Dendritic cell treated with granulocyte-macrophage colony-stimulating factor and Interleukin-4, amounts not matched to agents 40 ng/mL and 50 ng/mL, for 4 days (primary cell): ENCODE measurements at regions of chr12 and their contacts with region 1.

Region 1: GRCh38 chr12:55817346-55818139 is at the starts of genes ORMDL2 and SARNP:
- H3K4me3 Mint-ChIP-seq: no peak within 1 kb of the TSS
- H3K27ac Mint-ChIP-seq: no peak within 1 kb of the TSS
- H3K4me1 Mint-ChIP-seq: peaks cover 35% of the 10 kb centered on the region
- H3K27me3 Mint-ChIP-seq: no peaks in the 10 kb centered on the region

Region 2: DNA sequence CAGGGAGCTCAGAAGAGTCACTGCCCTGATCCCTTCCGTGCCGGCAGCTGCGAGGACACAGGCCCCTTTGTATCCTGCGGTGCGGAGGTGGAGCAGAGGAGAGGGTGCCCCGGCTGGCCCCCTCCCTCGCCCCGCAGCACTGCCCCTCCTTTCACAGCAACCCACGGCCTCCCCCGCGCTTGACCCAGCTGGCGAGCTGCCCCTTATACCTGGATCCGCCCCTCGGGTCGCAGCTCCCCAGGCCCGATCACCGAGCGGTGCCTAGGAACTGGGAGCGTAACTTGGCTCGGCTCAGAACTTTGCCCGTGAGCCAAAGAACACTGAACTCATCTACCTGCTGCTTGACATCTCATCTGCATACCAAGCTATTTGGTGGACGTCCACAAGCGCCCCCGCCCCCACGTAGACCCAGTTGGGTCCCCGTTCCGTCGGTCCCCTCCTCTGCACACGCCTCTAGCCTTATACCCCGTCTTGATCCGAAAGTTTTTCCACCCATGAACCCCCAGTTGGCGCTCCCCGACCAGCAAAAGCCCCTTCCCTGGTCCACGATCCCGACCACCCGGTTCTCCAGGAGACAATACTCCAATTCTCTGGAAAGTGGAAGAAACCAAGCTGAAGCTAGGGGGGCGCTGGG is 12.5 kb after region 1 on chr12:
- intact Hi-C with region 1: loop called (anchors 1 kb)
- H3K4me3 Mint-ChIP-seq: peak overlapping the region; percentile 98
- H3K27ac Mint-ChIP-seq: peak overlapping the region; percentile 98
- H3K4me1 Mint-ChIP-seq: peaks cover 77% of the 10 kb centered on the region
- H3K27me3 Mint-ChIP-seq: no peaks in the 10 kb centered on the region

Region 3: DNA sequence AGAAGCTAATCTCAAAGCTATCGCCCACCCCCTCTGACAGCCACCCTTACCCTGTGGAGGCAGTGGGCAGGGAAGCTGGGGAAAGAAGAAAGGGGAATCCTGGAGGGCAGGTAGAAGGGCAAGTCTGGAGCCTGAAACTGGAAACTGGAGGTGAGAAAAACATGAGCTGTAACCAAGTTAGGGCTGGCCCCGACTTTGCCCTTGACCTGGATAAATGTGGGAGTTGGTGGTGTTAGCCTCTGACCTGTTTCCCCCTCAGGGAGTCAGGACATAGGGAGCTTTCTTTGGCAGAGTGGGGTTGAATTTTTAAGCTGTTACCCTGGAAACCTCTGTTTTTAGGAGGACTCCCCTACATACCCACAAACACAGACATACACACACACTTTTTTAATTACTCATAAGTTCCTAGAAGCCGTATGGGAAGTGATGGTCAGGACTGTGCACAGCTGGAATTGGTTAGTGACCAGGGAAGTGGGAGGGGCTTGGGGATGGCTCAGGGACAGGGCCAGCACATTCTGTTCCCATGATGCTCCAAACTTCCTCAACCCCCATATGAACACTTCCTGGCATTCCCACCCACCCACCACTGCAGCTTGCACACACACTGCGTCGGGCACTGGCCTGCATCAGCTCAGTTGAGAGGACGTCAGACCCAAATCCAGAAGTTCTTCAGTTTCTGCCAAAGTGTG is 30.2 kb after region 1 on chr12:
- intact Hi-C with region 1: loop called (anchors 1 kb)
- H3K4me3 Mint-ChIP-seq: peak overlapping the region; percentile 32
- H3K27ac Mint-ChIP-seq: peak overlapping the region; percentile 99
- H3K4me1 Mint-ChIP-seq: peaks cover 73% of the 10 kb centered on the region
- H3K27me3 Mint-ChIP-seq: no peaks in the 10 kb centered on the region

Region 4: GRCh38 chr12:55940065-55940732 is 122.7 kb after region 1 on chr12:
- intact Hi-C with region 1: loop called (anchors 5 kb)
- H3K4me3 Mint-ChIP-seq: no peak overlapping the region
- H3K27ac Mint-ChIP-seq: no peak overlapping the region
- H3K4me1 Mint-ChIP-seq: peaks cover 19% of the 10 kb centered on the region
- H3K27me3 Mint-ChIP-seq: no peaks in the 10 kb centered on the region